ENCODE measurements at regions of chr7 and their contacts with region 1.

Region 1: GRCh38 chr7:33757562-33758165 is 147.7 kb upstream of the BMPER start:
- DNase-seq: peak in 4 of 5 donors; percentile 22 to 62 (median 37)
- H3K4me3 ChIP-seq: no peak overlapping the region
- H3K27ac ChIP-seq: no peak overlapping the region
- H3K4me1 ChIP-seq: peaks cover 3% of the 10 kb centered on the region
- H3K27me3 ChIP-seq: no peaks in the 10 kb centered on the region
- CTCF ChIP-seq: peak; percentile 45 to 67 (median 59)
- EP300 ChIP-seq: no peak
- POLR2A ChIP-seq: no peak

Region 2: DNA sequence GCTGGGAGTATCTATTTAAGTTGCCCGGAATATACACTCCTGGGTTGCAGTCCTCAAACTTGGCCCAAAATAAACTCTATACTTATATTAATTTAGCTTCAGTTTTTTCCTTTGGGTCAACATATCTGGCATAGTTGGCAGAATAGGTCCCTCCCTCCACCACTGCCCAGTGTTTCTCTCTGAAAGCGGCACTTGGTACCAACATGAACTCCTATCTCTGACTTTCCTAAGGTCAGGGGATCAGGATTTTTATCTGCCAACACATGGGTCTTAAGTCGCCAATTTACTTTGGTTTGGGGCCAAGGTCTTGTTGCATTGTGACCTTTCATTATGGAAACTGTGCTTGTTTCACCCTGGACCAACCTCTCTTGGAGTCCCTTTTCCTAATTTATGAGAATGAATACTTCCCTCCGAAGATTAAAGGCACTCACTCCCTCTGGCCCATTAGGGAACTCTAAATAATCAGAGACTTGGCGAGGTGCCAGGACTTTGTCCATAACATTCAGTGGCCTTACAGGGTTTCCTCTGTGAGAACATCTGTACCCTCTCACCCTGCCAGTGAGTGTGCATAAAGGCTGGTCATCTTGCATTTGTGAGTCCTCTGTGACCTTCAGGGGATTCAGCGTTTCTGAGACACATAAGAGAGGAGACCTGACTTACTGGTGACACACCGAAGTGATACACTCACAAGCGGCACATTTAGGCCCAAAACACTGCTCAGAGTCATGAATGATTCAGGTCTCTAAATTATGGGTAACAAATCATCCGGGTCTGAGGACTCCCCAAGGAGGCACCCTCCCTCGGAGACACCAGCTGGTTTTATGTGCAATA is 820.1 kb before region 1 on chr7:
- intact Hi-C with region 1: no loop called
- DNase-seq: peak; percentile 38 to 64 (median 57)
- H3K4me3 ChIP-seq: no peak overlapping the region
- H3K27ac ChIP-seq: no peak overlapping the region
- H3K4me1 ChIP-seq: peaks cover 17% of the 10 kb centered on the region
- H3K27me3 ChIP-seq: no peaks in the 10 kb centered on the region
- CTCF ChIP-seq: no peak
- EP300 ChIP-seq: no peak
- POLR2A ChIP-seq: no peak

Region 3: DNA sequence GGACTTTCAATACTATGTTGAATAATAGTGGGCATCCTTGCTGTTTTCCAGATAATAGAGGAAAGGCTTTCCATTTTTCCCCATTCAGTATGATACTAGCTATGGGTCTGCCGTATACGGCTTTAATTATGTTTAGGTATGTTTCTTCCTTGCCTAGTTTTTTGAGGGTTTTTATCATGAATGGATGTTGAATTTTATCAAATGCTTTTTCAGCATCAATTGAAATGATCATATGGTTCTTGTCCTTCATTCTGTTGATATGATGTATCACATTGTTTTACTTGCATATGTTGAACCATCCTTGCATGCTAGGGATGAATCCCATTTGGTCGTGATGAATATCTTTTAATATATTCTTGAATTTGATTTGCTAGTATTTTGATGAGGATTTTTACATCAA is 639.3 kb before region 1 on chr7:
- intact Hi-C with region 1: no loop called
- DNase-seq: no peak
- H3K4me3 ChIP-seq: no peak overlapping the region
- H3K27ac ChIP-seq: no peak overlapping the region
- H3K4me1 ChIP-seq: no peaks in the 10 kb centered on the region
- H3K27me3 ChIP-seq: no peaks in the 10 kb centered on the region
- CTCF ChIP-seq: no peak
- EP300 ChIP-seq: no peak
- POLR2A ChIP-seq: no peak

Region 4: DNA sequence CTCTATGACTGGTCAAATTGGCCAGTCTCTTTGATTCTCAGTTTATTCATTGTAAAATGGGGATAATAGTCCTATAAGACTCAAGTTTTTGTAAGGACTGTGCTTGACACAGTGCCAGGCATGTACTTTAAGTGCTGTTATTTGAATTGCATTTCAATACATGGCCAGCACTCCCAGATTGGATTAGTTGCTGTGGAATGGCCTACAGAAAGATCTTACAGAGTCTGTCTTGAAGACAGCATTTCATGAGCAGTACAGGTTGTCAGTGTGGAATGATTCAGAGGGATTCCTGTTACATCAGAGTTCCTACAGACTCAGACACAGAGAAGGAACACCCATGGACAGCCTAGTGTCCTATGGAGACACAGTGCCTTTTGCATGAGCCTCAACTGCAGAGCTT is 90.5 kb before region 1 on chr7:
- intact Hi-C with region 1: no loop called
- DNase-seq: no peak
- H3K4me3 ChIP-seq: no peak overlapping the region
- H3K27ac ChIP-seq: no peak overlapping the region
- H3K4me1 ChIP-seq: no peaks in the 10 kb centered on the region
- H3K27me3 ChIP-seq: no peaks in the 10 kb centered on the region
- CTCF ChIP-seq: no peak
- EP300 ChIP-seq: no peak
- POLR2A ChIP-seq: no peak

Region 5: GRCh38 chr7:33895025-33895804 is 137.6 kb after region 1 on chr7:
- intact Hi-C with region 1: loop called in 3 of 4 experiments (anchors 2 to 5 kb)
- DNase-seq: peak; percentile 83 to 93 (median 90)
- H3K4me3 ChIP-seq: no peak overlapping the region
- H3K27ac ChIP-seq: no peak overlapping the region
- H3K4me1 ChIP-seq: no peaks in the 10 kb centered on the region
- H3K27me3 ChIP-seq: no peaks in the 10 kb centered on the region
- CTCF ChIP-seq: peak; percentile 75 to 92 (median 83)
- EP300 ChIP-seq: no peak
- POLR2A ChIP-seq: no peak

Region 6: DNA sequence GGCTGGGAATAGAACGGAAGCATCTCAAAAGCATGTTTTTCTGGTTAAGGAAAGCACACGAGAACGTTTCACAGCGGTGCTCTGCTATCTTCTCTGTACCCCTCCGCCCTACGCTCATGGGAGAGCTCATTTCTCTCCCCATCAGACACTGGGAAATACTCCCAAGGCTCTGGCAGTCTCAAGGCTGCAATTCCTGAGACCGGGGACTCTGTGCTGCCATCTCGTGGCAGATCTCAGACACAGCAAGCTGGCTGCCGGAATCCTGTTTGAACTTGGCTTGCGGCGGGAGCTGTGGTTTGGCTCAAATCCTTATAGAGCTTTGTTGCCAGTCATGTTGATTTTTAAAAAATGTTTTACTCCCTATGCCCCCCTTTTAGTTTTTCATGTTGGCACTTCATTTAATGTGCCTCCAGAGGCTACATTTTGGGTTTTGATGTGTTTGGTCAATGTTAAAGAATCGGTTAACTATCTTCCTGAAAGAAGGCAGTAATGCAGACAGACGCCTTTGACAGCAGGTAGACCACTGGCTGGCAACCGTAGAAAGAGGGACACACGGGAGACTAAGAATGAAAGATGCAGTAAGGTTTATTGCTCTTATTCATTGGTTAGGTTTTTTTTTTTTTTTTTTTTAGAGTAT is 175.3 kb after region 1 on chr7:
- intact Hi-C with region 1: loop called in 1 of 4 experiments (anchors 10 kb)
- DNase-seq: peak; percentile 87 to 93 (median 89)
- H3K4me3 ChIP-seq: peak overlapping the region; percentile 22
- H3K27ac ChIP-seq: peak overlapping the region in 1 of 2 donors; percentile 25
- H3K4me1 ChIP-seq: peaks cover 1% of the 10 kb centered on the region
- H3K27me3 ChIP-seq: no peaks in the 10 kb centered on the region
- CTCF ChIP-seq: peak; percentile 74 to 96 (median 85)
- EP300 ChIP-seq: no peak
- POLR2A ChIP-seq: no peak

Region 7: GRCh38 chr7:35036361-35037171 is 1278.9 kb after region 1 on chr7:
- intact Hi-C with region 1: no loop called
- DNase-seq: peak; percentile 38 to 72 (median 61)
- H3K4me3 ChIP-seq: peak overlapping the region; percentile 63
- H3K27ac ChIP-seq: peak overlapping the region; percentile 3 to 54
- H3K4me1 ChIP-seq: no peaks in the 10 kb centered on the region
- H3K27me3 ChIP-seq: no peaks in the 10 kb centered on the region
- CTCF ChIP-seq: no peak
- EP300 ChIP-seq: no peak
- POLR2A ChIP-seq: no peak